Adrenal gland (tissue), 19 donors: ENCODE measurements at regions of chr9 and their contacts with region 1.

Region 1: GRCh38 chr9:34332076-34332964 is 3.0 kb downstream of the NUDT2 start:
- DNase-seq: peak in 2 of 7 donors; percentile 32 to 49
- H3K4me3 ChIP-seq: no peak overlapping the region
- H3K27ac ChIP-seq: no peak overlapping the region
- H3K4me1 ChIP-seq: peaks cover 8 to 18% of the 10 kb centered on the region in 2 donors
- H3K27me3 ChIP-seq: no peaks in the 10 kb centered on the region
- CTCF ChIP-seq: peak; percentile 36 to 81 (median 74)
- POLR2A ChIP-seq: no peak

Region 2: GRCh38 chr9:34376596-34377403 is 44.5 kb after region 1 on chr9 and contains the start of gene MYORG:
- intact Hi-C with region 1: loop called (anchors 2 to 5 kb)
- DNase-seq: peak; percentile 96 to 99 (median 98)
- H3K4me3 ChIP-seq: peak within 1 kb of the TSS in 3 of 4 donors; percentile 20 to 59 (median 46)
- H3K27ac ChIP-seq: peak within 1 kb of the TSS; percentile 18 to 80 (median 46)
- H3K4me1 ChIP-seq: peaks cover 10 to 33% of the 10 kb centered on the region in 2 donors
- H3K27me3 ChIP-seq: no peaks in the 10 kb centered on the region
- CTCF ChIP-seq: no peak
- POLR2A ChIP-seq: peak; percentile 36 to 87
- total RNA-seq, gene MYORG: 3.5 to 33.8 (median 14.9) TPM

Region 3: DNA sequence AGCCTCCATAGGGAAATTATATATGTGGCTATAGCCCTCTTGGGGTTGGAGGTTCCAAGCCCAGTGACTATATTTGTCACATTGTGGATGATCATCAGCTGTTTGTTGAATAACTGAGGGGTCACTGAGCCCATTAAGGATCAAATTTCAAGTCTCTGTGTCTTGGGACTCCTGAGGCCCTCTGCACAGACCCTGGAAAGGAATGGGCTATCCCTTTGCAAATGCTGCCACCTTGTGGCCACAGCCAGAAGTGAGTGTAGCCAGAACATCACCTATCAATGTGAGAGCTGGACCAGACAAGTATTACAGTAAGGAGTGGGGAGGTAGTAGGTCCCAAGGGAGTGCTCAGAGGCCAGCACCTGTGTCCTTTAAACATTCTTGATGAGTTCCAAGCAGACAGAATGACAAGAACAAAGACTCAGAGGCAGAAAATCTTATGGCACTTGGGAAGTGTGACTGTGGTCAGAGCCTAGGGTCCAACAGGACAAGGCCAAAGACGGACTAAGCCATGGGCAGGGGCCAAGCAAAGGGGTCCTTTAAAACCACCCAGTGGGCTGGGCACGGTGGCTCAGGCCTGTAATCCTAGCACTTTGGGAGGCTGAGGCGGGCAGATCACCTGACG is 271.4 kb after region 1 on chr9:
- intact Hi-C with region 1: loop called in 1 of 2 experiments (anchors 10 kb)
- DNase-seq: peak; percentile 71 to 94 (median 83)
- H3K4me3 ChIP-seq: no peak overlapping the region
- H3K27ac ChIP-seq: no peak overlapping the region
- H3K4me1 ChIP-seq: no peaks in the 10 kb centered on the region
- H3K27me3 ChIP-seq: no peaks in the 10 kb centered on the region
- CTCF ChIP-seq: peak; percentile 78 to 93 (median 88)
- POLR2A ChIP-seq: no peak